Vagina (tissue), 2 donors: ENCODE measurements at regions of chr6 and their contacts with region 1.

Region 1: GRCh38 chr6:70282312-70282918 is 20.5 kb downstream of the COL9A1 start:
- DNase-seq: no peak
- H3K4me3 ChIP-seq: peak overlapping the region in 1 of 2 donors; percentile 18
- H3K27ac ChIP-seq: no peak overlapping the region
- H3K4me1 ChIP-seq: peaks cover 20% of the 10 kb centered on the region
- H3K27me3 ChIP-seq: no peaks in the 10 kb centered on the region
- CTCF ChIP-seq: no peak
- POLR2A ChIP-seq: no peak

Region 2: DNA sequence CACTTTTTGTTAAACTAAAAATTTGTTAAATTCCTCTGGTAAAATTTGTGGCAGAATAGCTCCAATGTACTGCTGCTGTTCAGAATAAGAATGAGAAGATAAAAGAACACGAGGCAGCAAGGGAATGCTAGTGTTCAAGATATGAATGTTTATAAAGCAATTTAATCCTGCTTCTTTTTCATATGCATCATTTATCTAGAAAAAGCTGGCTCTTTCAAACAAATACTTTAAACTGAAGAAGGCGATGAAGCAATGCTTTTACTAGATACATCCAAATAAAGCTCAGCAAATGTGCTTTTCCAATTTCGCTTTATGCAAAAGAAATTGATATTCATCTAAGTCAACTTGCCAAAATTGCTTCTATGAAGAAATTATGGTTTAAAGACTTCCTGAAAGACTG is 46.1 kb before region 1 on chr6:
- intact Hi-C with region 1: loop called (anchors 1 kb)
- DNase-seq: no peak
- H3K4me3 ChIP-seq: no peak overlapping the region
- H3K27ac ChIP-seq: no peak overlapping the region
- H3K4me1 ChIP-seq: no peaks in the 10 kb centered on the region
- H3K27me3 ChIP-seq: no peaks in the 10 kb centered on the region
- CTCF ChIP-seq: no peak
- POLR2A ChIP-seq: no peak